Lower lobe of right lung (tissue), 2 donors: ENCODE measurements at regions of chr6 and their contacts with region 1.

Region 1: DNA sequence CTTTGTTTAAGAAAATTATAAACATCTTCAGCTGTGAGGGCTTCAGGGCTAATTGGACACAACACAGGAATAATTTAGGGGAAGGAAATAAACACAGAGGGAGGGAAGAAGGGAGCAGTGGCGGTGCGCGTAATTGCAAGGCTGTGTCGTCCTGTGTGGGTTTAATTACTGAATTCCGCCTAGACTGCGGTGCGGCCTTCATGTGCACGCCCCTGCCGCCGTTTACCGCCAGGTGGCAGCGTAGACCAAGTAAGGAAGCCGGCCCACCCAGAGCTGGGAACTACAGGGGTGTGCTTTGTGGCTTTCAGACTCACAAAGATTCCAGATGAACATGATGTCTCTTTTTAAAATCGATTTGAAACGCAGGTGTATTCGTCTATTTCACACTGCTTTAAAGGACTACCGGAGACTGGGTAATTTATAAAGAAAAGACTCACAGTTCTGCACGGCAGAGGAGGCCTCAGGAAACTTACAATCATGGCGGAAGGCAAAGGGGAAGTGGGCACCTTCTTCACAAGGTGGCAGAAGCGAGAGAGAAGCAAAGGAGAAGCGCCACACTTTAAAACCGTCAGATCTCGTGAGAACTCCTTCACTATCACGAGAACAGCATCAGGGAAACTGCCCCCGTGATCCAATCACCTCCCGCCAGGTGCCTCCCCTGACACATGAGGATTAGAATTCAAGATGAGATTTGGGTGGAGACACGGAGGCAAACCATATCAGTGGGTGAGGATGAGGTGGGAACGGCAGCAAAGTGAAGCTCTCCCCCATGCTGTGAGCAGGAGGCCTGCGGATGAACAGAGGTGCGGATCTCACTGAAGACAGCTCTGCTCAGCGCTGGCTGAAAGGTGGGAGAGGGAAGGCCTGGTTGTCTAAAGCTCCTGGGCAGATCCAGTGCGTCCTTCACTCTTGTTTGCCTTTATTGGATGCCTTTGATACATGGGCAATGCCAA is 222.0 kb upstream of the PDE10A start:
- DNase-seq: peak; percentile 77
- ATAC-seq: peak; percentile 87 to 88
- H3K4me3 ChIP-seq: no peak overlapping the region
- H3K27ac ChIP-seq: no peak overlapping the region
- H3K4me1 ChIP-seq: no peaks in the 10 kb centered on the region
- H3K27me3 ChIP-seq: no peaks in the 10 kb centered on the region
- CTCF ChIP-seq: peak; percentile 84

Region 2: DNA sequence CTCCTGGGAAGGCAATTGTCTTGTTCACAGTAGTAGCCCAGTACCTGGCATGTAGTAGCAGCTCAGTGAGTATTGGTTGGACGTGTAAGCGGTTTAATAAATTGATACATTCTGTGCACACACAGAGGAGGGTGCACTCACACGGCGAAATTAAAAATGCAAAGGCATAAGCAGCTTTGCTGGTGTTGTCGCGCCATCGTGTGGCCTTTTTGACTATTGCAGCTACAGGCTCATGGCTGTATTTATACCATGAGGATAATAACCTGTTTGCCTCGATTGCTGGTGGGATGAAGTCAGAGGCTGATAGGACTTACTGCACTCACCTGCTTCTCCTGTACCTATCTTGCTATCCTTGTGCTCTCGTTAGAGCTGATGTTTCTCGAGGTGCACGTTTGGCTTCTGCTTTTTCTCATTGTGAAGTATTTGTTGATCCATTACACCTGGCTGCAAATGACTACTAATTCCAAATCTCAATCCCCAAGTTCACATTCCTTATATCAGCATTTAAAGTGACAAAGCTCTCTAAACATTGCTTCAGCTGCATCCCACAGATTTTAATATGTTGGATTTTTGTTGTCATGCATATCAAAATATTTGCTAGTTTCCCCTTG is 221.1 kb after region 1 on chr6:
- intact Hi-C with region 1: loop called (anchors 10 kb)
- DNase-seq: peak; percentile 63
- ATAC-seq: peak; percentile 66 to 70
- H3K4me3 ChIP-seq: no peak overlapping the region
- H3K27ac ChIP-seq: no peak overlapping the region
- H3K4me1 ChIP-seq: no peaks in the 10 kb centered on the region
- H3K27me3 ChIP-seq: no peaks in the 10 kb centered on the region
- CTCF ChIP-seq: peak; percentile 83